H1 (cell line): ENCODE measurements at regions of chr17 and their contacts with region 1.

Region 1: GRCh38 chr17:50865984-50866774 is at the start of gene TOB1:
- DNase-seq: peak; percentile 90 to 97
- H3K4me3 ChIP-seq: peak within 1 kb of the TSS; percentile 81 to 99 (median 91)
- H3K27ac ChIP-seq: peak within 1 kb of the TSS; percentile 95
- H3K4me1 ChIP-seq: peaks cover 0 to 2% (median 0%) of the 10 kb centered on the region in 4 experiments; a peak in 3 of 7 replicates
- H3K27me3 ChIP-seq: no peaks in the 10 kb centered on the region
- CTCF ChIP-seq: no peak
- EP300 ChIP-seq: no peak
- POLR2A ChIP-seq: peak; percentile 98 to 100
- RAD21 ChIP-seq: 0 out of 4 replicates have a peak, but pooled peaks of 1 of the 2 experiments have one; percentile 9
- total RNA-seq, gene TOB1: 20.8 and 26.7 TPM in 2 replicates

Region 2: DNA sequence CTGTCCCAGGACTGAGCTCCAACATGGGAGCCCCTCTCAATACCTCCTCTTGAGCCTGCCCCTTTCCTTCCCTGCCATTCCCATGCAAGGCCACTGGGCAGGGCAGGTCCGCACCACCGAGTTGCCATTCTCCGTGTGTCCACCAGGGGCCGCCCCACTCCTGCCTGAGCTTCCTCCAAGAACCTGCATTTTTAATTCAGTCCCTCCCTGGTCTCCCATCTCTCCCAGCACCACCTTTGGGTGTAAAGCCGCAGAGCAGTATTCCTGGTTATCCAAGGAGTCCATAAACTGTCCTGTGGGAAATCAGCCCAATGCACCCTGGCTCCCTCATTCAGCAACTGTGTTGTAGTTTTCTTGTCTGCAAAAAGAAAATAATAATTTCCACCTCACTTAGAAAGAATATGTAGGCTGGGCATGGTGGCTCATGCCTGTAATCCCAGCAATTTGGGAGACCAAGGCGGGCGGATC is 83.0 kb before region 1 on chr17:
- CTCF ChIA-PET with region 1: interaction called, 6 read pairs
- POLR2A ChIA-PET with region 1: interaction called, 14 read pairs
- DNase-seq: peak; percentile 89 to 98
- H3K4me3 ChIP-seq: no peak overlapping the region
- H3K27ac ChIP-seq: no peak overlapping the region
- H3K4me1 ChIP-seq: peaks cover 0 to 3% (median 0%) of the 10 kb centered on the region in 4 experiments; a peak in 1 of 7 replicates
- H3K27me3 ChIP-seq: no peaks in the 10 kb centered on the region
- CTCF ChIP-seq: peak; percentile 99 to 100 (median 99)
- EP300 ChIP-seq: peak in 1 of 2 experiments; percentile 40; a peak in 1 of 3 replicates
- POLR2A ChIP-seq: no peak
- RAD21 ChIP-seq: peak; percentile 99 to 100

Region 3: DNA sequence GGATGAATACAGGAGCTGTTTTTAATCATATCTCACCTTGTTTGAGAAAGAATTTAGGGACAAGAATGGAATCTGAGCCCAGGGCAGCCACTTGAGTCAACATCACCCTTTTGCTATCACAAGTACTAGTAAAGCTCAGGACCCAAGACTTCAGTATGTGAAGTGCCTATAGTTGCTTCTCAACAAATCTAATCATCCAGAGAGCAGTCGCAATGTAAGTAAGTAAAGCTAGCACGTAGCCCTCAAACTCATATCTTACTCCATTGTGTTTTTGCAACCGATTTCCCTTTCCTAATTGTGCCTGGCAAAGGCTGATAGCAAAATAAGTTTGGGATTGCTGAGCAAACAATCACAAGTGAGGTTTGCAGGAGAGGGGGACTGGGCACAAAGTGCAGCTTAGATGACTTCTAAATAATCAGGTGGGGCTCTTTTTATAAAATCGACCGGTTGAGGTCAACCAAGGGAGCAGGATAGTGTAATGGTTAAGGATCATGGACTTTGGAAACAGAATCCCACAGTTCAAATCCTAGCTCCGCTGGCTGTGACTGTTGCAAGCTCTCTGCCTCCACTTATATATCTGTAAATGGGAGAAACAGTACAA is 13.1 kb before region 1 on chr17:
- CTCF ChIA-PET with region 1: interaction called, 70 read pairs
- POLR2A ChIA-PET with region 1: interaction called, 52 read pairs
- DNase-seq: no peak
- H3K4me3 ChIP-seq: no peak overlapping the region
- H3K27ac ChIP-seq: no peak overlapping the region
- H3K4me1 ChIP-seq: peaks cover 0 to 4% (median 0%) of the 10 kb centered on the region in 4 experiments; a peak in 1 of 7 replicates
- H3K27me3 ChIP-seq: no peaks in the 10 kb centered on the region
- CTCF ChIP-seq: no peak
- EP300 ChIP-seq: no peak
- POLR2A ChIP-seq: no peak
- RAD21 ChIP-seq: no peak

Region 4: DNA sequence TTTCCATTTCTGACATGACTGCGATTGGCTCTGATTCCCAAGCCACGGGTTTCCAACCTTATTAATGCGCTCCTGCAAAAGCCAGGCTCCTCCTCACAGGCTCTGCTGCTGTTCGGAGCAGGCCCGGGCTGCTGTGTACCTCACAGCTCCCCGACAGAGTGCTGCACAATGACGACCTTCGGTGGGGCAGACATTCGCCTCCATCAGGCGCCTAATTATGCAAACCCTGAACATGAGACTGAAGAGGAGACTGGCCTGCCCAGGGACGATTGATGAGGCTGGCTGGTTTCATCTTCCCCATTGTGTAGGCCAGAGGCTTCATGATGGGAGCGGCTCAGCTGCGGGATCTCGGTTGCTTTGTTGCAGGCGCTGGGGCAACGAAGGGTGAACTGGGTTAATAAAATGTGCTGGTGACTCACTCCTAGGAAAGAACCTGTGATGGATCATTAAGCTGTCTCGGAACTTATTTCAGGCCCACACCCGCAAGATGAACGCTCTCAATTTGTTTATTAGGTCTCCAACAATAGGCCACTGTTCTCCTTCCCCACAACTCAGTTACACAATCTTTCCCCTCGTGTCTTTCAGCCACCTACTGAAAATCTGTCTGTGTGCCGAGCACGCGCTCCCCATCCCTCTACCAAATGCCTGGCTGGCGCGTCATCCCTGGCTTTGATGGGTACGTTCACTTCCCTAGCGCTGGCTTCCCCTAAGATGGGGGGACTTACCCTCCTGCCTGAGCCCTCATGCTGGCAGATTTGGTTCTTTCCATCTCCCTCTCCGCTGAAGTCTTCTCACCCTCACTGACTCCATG is 27.2 kb after region 1 on chr17:
- CTCF ChIA-PET with region 1: no interaction called
- POLR2A ChIA-PET with region 1: interaction called, 72 read pairs
- DNase-seq: no peak
- H3K4me3 ChIP-seq: no peak overlapping the region
- H3K27ac ChIP-seq: no peak overlapping the region
- H3K4me1 ChIP-seq: peaks cover 8 to 20% (median 15%) of the 10 kb centered on the region in 4 experiments
- H3K27me3 ChIP-seq: no peaks in the 10 kb centered on the region
- CTCF ChIP-seq: no peak
- EP300 ChIP-seq: no peak
- POLR2A ChIP-seq: no peak
- RAD21 ChIP-seq: no peak

Region 5: DNA sequence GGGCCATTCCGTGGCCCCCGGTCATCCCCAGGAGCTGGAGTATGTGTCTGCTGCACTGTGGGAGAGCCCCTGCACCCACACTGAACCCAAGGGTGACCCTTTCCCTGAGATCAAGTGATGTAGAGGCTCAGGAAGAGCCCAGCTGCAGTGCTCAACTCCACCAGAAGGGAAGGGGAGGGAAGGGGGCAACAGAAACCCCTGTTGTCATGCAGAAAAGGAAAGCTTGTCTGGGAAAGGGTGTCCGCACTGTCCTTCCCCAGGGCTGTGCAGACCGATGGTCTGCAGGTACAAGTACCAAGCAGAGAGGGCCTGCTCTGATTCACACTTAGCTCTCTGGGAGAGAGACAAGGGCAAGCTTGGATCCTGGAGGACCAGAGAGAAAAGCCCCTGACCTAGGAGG is 45.7 kb after region 1 on chr17:
- CTCF ChIA-PET with region 1: interaction called, 6 read pairs
- POLR2A ChIA-PET with region 1: interaction called, 85 read pairs
- DNase-seq: no peak
- H3K4me3 ChIP-seq: no peak overlapping the region
- H3K27ac ChIP-seq: no peak overlapping the region
- H3K4me1 ChIP-seq: peaks cover 1 to 37% (median 23%) of the 10 kb centered on the region in 4 experiments
- H3K27me3 ChIP-seq: no peaks in the 10 kb centered on the region
- CTCF ChIP-seq: peak in 1 of 3 experiments; percentile 29; a peak in 1 of 4 replicates
- EP300 ChIP-seq: no peak
- POLR2A ChIP-seq: no peak
- RAD21 ChIP-seq: peak in 1 of 2 experiments; percentile 12; a peak in 1 of 4 replicates

Region 6: DNA sequence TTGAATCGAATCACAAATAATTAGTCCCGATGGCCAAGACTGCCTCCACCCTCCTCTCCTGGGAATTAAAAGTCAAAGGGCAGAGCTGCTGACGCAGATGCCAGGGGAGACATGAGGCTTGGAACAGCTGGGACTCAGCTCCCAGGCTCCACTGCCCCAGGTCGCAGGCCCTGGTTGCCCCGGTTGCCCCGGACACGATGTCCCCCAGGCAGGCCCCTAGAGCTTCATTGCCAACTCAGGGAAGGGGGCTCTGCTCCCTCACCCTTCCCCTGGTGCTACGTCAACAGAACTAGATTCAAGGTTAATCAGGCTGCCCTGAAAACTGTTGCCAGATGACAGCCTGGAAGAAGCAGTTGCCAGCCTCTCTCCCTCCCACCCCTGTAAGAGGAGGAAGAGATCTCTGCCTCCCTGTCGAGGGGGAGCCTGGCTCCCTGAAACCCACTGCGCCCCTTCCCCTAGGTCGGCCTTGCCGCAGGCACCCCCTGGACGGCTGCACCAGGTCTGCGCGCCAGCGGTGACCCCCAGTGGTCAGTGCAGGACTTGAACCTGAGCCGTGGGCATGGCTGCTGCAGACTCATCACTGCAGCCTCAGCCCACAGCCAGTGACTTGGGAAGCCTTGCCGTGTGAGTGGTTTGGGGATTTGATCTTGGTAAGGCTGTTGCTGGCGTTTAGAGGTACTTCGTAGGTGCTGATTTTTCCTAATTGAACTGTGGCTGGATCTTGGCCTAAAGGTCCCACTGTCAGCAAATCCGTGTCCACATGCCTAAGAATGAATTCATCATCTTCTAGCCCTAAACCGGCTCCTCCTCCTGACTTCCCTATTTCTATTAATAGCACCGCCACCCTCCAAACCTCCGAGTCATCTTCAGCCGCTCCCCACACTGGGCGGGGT is 84.1 kb after region 1 on chr17:
- CTCF ChIA-PET with region 1: interaction called, 735 read pairs
- POLR2A ChIA-PET with region 1: interaction called, 308 read pairs
- DNase-seq: peak in 1 of 2 experiments; percentile 86
- H3K4me3 ChIP-seq: no peak overlapping the region; a peak in 1 of 8 replicates
- H3K27ac ChIP-seq: no peak overlapping the region; the same call in 1 of the 2 replicates
- H3K4me1 ChIP-seq: peaks cover 3 to 32% (median 23%) of the 10 kb centered on the region in 4 experiments
- H3K27me3 ChIP-seq: no peaks in the 10 kb centered on the region
- CTCF ChIP-seq: peak; percentile 88 to 95 (median 90)
- EP300 ChIP-seq: no peak
- POLR2A ChIP-seq: no peak
- RAD21 ChIP-seq: peak; percentile 99 to 100